ENCODE measurements at regions of chr17 and their contacts with region 1.

Region 1: DNA sequence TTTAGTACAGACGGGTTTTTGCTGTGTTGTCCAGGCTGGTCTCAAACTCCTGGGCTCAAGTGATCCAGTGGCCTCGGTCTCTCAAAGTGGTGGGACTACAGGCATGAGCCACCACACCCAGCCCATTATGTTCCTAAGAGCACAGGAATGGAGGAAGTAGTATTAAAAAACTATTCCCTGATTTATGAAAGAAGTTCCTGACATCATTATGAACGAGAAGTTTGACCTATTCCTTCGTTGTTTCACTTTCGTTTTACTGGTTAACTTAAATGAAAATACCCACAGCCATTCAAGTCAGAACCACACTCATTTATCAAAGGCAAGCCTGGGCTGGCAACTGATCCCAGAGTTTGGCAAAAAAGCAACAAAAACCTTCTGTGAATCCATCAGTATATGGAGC is 13.5 kb upstream of the CBX4 start:
- DNase-seq: peak; percentile 36
- ATAC-seq: no peak
- H3K4me3 ChIP-seq: peak overlapping the region; percentile 38; the same call in 1 of the 2 replicates
- H3K27ac ChIP-seq: no peak overlapping the region
- H3K4me1 ChIP-seq: peaks cover 25% of the 10 kb centered on the region
- H3K27me3 ChIP-seq: no peaks in the 10 kb centered on the region
- CTCF ChIP-seq: no peak

Region 2: DNA sequence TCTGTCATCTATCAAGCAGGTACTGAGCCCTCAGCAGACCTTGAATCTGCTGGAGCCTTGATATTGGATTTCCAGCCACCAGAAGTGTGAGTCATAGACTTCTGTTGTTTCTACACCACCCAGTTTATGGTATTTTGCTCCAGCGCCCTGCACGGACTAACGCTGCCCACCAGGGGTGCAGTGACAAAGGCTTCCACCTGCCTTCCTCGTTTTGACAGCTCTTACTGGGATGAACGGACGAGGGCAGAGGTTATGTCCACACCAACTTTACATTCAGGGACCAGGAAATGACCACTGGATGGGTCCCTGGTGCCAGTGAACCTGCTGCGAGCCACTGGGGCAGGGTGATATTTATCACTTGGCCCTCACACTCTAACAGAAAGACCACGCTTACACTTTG is 53.1 kb after region 1 on chr17:
- CTCF ChIA-PET with region 1: interaction called, 14 read pairs
- POLR2A ChIA-PET with region 1: no interaction called
- intact Hi-C with region 1: no loop called
- DNase-seq: peak; percentile 78
- ATAC-seq: peak; percentile 84
- H3K4me3 ChIP-seq: no peak overlapping the region
- H3K27ac ChIP-seq: no peak overlapping the region
- H3K4me1 ChIP-seq: no peaks in the 10 kb centered on the region
- H3K27me3 ChIP-seq: peaks cover 29% of the 10 kb centered on the region
- CTCF ChIP-seq: peak; percentile 68